ENCODE measurements at regions of chr13 and their contacts with region 1.

Region 1: GRCh38 chr13:41019011-41019487 is at the start of gene ELF1:
- DNase-seq: peak; percentile 67
- ATAC-seq: peak; percentile 87
- H3K4me3 Mint-ChIP-seq: peak within 1 kb of the TSS; percentile 88
- H3K27ac Mint-ChIP-seq: peak within 1 kb of the TSS; percentile 96
- H3K4me1 Mint-ChIP-seq: peaks cover 31% of the 10 kb centered on the region
- H3K27me3 Mint-ChIP-seq: no peaks in the 10 kb centered on the region
- total RNA-seq, gene ELF1: 75.2 to 87.0 TPM

Region 2: GRCh38 chr13:40597740-40598370 is 421.2 kb before region 1 on chr13:
- CTCF ChIA-PET with region 1: no interaction called
- POLR2A ChIA-PET with region 1: no interaction called
- intact Hi-C with region 1: no loop called
- DNase-seq: no peak
- ATAC-seq: no peak
- H3K4me3 Mint-ChIP-seq: peak overlapping the region; percentile 57
- H3K27ac Mint-ChIP-seq: peak overlapping the region; percentile 89
- H3K4me1 Mint-ChIP-seq: peaks cover 92% of the 10 kb centered on the region
- H3K27me3 Mint-ChIP-seq: no peaks in the 10 kb centered on the region

Region 3: DNA sequence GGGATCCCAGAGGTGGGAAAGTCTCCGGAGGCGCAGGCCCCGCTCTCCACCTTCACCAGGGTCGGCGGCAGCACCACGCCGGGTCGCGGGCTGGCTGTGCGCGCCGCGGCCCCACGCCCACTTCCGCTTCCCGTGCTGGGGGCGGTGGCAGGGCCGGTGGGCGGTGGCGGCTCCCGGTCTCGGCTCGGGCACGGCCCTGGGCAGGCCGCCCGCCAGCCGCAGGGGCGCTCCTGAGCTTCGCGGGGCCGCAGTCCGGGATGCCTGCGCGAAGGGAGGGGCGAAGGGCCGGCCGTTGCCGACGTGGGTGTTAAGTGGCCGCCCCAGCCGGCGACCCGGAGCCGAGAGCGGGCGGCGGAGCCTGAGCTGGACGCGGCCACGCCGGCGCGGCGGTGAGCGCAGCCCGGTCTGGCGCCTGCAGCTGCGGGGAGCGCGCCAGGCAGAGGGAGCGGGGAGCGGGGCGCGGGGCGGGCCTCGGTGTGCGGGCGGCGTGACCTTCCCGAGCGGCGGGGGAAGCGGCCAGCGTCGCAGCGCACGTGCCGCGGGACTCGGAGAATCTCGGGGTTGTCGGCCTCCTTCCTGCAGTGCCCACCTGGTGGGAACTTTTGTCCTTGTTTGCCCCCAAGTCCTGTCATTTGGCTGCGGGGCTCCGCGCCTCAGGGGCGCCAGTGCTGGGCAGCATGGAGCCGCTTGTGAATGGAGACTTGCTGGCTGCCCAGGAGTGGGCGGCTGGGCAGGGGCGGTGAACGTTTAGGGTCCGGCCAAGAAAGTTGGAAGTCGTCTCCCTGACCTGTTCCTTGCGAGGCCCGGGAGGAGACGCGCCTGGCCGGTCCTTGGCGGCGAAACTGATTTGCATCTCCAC is 229.5 kb before region 1 on chr13 and contains the start of gene SLC25A15:
- CTCF ChIA-PET with region 1: no interaction called
- POLR2A ChIA-PET with region 1: no interaction called
- intact Hi-C with region 1: loop called in 1 of 2 experiments (anchors 5 kb)
- DNase-seq: peak; percentile 79
- ATAC-seq: peak; percentile 79
- H3K4me3 Mint-ChIP-seq: peak within 1 kb of the TSS; percentile 82
- H3K27ac Mint-ChIP-seq: peak within 1 kb of the TSS; percentile 83
- H3K4me1 Mint-ChIP-seq: peaks cover 27% of the 10 kb centered on the region
- H3K27me3 Mint-ChIP-seq: no peaks in the 10 kb centered on the region
- total RNA-seq, gene SLC25A15: 20.5 to 23.6 TPM

Region 4: GRCh38 chr13:40982772-40983171 is 36.3 kb before region 1 on chr13:
- CTCF ChIA-PET with region 1: interaction called, 9 read pairs
- POLR2A ChIA-PET with region 1: interaction called, 5 read pairs
- intact Hi-C with region 1: loop called (anchors 1 to 2 kb)
- DNase-seq: peak; percentile 70
- ATAC-seq: peak; percentile 62
- H3K4me3 Mint-ChIP-seq: peak overlapping the region; percentile 91
- H3K27ac Mint-ChIP-seq: peak overlapping the region; percentile 92
- H3K4me1 Mint-ChIP-seq: peaks cover 66% of the 10 kb centered on the region
- H3K27me3 Mint-ChIP-seq: no peaks in the 10 kb centered on the region

Region 5: GRCh38 chr13:41004875-41005693 is 14.0 kb before region 1 on chr13:
- CTCF ChIA-PET with region 1: interaction called, 6 read pairs
- POLR2A ChIA-PET with region 1: interaction called, 4 read pairs
- intact Hi-C with region 1: loop called in 1 of 2 experiments (anchors 1 kb)
- DNase-seq: no peak
- ATAC-seq: peak; percentile 76
- H3K4me3 Mint-ChIP-seq: peak overlapping the region; percentile 29
- H3K27ac Mint-ChIP-seq: peak overlapping the region; percentile 93
- H3K4me1 Mint-ChIP-seq: peaks cover 63% of the 10 kb centered on the region
- H3K27me3 Mint-ChIP-seq: no peaks in the 10 kb centered on the region

Region 6: GRCh38 chr13:41029629-41030028 is 10.6 kb after region 1 on chr13:
- CTCF ChIA-PET with region 1: interaction called, 11 read pairs
- POLR2A ChIA-PET with region 1: no interaction called
- intact Hi-C with region 1: no loop called
- DNase-seq: peak; percentile 48
- ATAC-seq: peak; percentile 64
- H3K4me3 Mint-ChIP-seq: no peak overlapping the region
- H3K27ac Mint-ChIP-seq: no peak overlapping the region
- H3K4me1 Mint-ChIP-seq: peaks cover 19% of the 10 kb centered on the region
- H3K27me3 Mint-ChIP-seq: no peaks in the 10 kb centered on the region

Region 7: DNA sequence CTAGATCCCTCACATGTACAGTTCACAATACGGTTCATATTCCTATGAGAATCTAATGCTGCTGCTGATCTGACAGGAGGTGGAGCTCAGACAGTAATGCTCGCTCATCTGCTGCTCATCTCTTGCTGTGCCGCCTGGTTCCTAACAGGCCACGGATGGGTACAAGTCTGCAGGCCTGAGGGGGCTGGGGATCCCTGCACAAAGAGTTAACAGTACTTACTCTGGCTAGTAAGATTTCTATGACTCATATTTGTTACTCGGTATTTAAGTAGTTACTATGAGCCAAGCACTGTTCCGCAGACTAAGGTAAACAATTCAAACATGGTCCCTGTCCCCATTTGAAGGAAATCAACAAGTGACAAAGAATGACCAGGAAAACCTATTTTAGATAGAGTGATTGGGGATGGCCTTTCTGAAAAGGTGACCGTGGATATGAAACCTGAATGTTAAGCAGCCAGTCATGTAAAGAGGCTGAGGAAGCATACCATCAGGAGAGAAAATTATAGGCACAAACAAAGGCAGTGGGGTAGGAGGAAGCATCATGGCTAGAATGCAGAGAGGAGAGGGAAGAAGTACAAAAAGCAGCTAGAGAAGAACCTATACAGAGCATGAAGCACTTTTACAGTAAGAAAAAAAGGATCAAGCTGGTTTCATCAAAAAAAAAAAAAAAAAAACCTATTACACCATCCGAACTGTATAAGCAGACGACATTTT is 21.7 kb after region 1 on chr13:
- CTCF ChIA-PET with region 1: no interaction called
- POLR2A ChIA-PET with region 1: no interaction called
- intact Hi-C with region 1: no loop called
- DNase-seq: no peak
- ATAC-seq: peak; percentile 44
- H3K4me3 Mint-ChIP-seq: no peak overlapping the region
- H3K27ac Mint-ChIP-seq: peak overlapping the region; percentile 6
- H3K4me1 Mint-ChIP-seq: peaks cover 8% of the 10 kb centered on the region
- H3K27me3 Mint-ChIP-seq: no peaks in the 10 kb centered on the region